ENCODE measurements at regions of chr1 and their contacts with region 1.

Region 1: DNA sequence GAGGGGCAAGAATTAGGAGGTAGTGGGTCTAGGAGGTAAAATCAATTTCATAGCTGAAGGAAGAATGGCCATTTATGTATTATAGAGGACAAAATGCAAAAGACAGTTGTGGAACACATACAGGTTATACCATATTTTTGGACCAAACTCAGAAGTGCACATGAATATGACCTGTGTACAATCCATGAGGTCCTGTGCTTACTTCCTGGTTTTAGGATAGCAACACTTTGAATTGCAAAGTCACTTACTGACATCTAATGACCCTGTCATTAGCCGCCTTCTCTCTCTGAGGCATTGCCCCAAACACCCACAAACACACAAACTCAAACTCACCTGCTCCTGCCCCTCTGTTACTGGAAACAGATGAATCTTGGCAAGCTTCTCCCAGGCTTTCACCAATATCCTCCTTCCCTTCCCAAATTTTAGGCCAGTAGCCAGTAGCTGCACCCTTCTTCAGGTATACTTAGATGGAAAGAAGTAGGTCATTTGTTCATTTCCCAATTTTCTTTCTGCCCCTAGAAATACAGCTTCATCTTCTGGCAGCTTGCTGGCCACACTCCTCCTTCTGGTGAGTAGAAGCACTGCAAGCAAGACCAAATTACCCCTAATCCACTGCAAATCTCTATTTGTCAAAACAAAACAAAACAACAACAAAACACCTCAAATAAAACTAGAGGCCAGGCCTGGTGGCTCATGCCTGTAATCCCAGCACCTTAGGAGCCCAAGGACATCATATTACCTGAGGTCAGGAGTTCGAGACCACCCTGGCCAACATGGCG is 13.7 kb upstream of the RPL5 start:
- DNase-seq: peak; percentile 32
- H3K4me3 ChIP-seq: no peak overlapping the region
- H3K27ac ChIP-seq: no peak overlapping the region
- H3K4me1 ChIP-seq: no peaks in the 10 kb centered on the region
- H3K27me3 ChIP-seq: no peaks in the 10 kb centered on the region
- CTCF ChIP-seq: peak; percentile 64 to 66
- POLR2A ChIP-seq: no peak

Region 2: GRCh38 chr1:92484472-92485380 is 333.4 kb before region 1 on chr1:
- CTCF ChIA-PET with region 1: interaction called, 4 read pairs
- POLR2A ChIA-PET with region 1: no interaction called
- dilution Hi-C with region 1: no loop called
- intact Hi-C with region 1: loop called (anchors 5 kb)
- DNase-seq: peak; percentile 23
- H3K4me3 ChIP-seq: peak overlapping the region in 1 of 3 experiments; percentile 26
- H3K27ac ChIP-seq: no peak overlapping the region
- H3K4me1 ChIP-seq: peaks cover 55% of the 10 kb centered on the region
- H3K27me3 ChIP-seq: peaks cover 66 to 94% of the 10 kb centered on the region in 2 experiments
- CTCF ChIP-seq: no peak
- POLR2A ChIP-seq: no peak

Region 3: GRCh38 chr1:92705446-92705845 is 112.7 kb before region 1 on chr1:
- CTCF ChIA-PET with region 1: interaction called, 10 read pairs
- POLR2A ChIA-PET with region 1: no interaction called
- dilution Hi-C with region 1: no loop called
- intact Hi-C with region 1: no loop called
- DNase-seq: peak; percentile 84
- H3K4me3 ChIP-seq: peak overlapping the region in 1 of 3 experiments; percentile 45
- H3K27ac ChIP-seq: peak overlapping the region; percentile 41
- H3K4me1 ChIP-seq: peaks cover 18% of the 10 kb centered on the region
- H3K27me3 ChIP-seq: no peaks in the 10 kb centered on the region
- CTCF ChIP-seq: no peak
- POLR2A ChIP-seq: no peak

Region 4: GRCh38 chr1:92749024-92749634 is 69.0 kb before region 1 on chr1:
- CTCF ChIA-PET with region 1: interaction called, 151 read pairs
- POLR2A ChIA-PET with region 1: no interaction called
- dilution Hi-C with region 1: no loop called
- intact Hi-C with region 1: loop called (anchors 1 kb)
- DNase-seq: peak; percentile 42
- H3K4me3 ChIP-seq: no peak overlapping the region
- H3K27ac ChIP-seq: no peak overlapping the region
- H3K4me1 ChIP-seq: peaks cover 13% of the 10 kb centered on the region
- H3K27me3 ChIP-seq: no peaks in the 10 kb centered on the region
- CTCF ChIP-seq: peak; percentile 61 to 64
- POLR2A ChIP-seq: no peak

Region 5: DNA sequence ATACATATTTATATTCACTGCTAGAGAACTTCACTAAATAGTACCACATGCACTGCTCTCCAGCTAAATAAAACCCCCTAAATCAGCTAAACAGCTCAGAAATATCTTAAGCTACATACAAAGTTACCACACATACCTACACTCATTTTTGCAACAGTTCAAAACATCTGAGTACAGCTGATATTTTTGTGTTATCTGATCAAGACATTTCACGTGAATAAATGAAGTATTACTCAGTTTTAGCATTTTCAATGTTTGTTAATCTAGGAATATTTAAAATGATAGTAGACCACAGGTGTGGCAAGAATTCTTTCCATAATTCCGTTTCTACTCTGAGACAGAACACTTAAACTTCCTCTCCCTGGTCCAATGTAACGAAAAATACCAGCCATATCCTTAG is 54.1 kb before region 1 on chr1:
- CTCF ChIA-PET with region 1: interaction called, 13 read pairs
- POLR2A ChIA-PET with region 1: no interaction called
- dilution Hi-C with region 1: no loop called
- intact Hi-C with region 1: no loop called
- DNase-seq: no peak
- H3K4me3 ChIP-seq: no peak overlapping the region
- H3K27ac ChIP-seq: no peak overlapping the region
- H3K4me1 ChIP-seq: no peaks in the 10 kb centered on the region
- H3K27me3 ChIP-seq: no peaks in the 10 kb centered on the region
- CTCF ChIP-seq: no peak
- POLR2A ChIP-seq: no peak

Region 6: DNA sequence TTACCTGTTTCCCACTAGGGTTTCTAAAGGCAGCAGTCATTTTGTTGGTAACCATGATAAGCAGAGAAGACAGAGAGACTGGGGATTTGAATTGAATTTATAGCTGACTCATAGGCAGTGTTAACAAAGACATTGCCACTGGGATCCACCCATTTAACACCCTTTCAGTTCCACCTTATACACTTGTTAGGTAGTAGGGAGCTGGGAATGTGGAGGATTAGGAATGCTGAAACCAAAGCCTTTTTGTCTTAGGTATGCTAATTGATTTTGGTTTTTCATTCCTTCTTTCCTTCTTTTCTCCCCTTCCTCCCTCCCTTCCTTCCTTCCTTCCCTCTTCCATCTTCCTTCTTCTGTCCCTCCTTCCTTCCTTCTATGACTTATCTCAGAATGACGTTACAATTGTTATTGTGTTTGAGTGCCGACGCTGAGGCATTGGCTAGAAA is 25.8 kb before region 1 on chr1:
- CTCF ChIA-PET with region 1: interaction called, 43 read pairs
- POLR2A ChIA-PET with region 1: interaction called, 4 read pairs
- dilution Hi-C with region 1: no loop called
- intact Hi-C with region 1: no loop called
- DNase-seq: peak; percentile 75
- H3K4me3 ChIP-seq: peak overlapping the region in 1 of 3 experiments; percentile 19
- H3K27ac ChIP-seq: peak overlapping the region; percentile 42
- H3K4me1 ChIP-seq: peaks cover 14% of the 10 kb centered on the region
- H3K27me3 ChIP-seq: no peaks in the 10 kb centered on the region
- CTCF ChIP-seq: no peak
- POLR2A ChIP-seq: no peak

Region 7: GRCh38 chr1:92831762-92832536 is 13.8 kb after region 1 on chr1 and contains the start of gene RPL5:
- CTCF ChIA-PET with region 1: interaction called, 33 read pairs
- POLR2A ChIA-PET with region 1: no interaction called
- dilution Hi-C with region 1: no loop called
- intact Hi-C with region 1: no loop called
- DNase-seq: peak; percentile 99
- H3K4me3 ChIP-seq: peak within 1 kb of the TSS; percentile 85 to 97 (median 85)
- H3K27ac ChIP-seq: peak within 1 kb of the TSS; percentile 73
- H3K4me1 ChIP-seq: peaks cover 26% of the 10 kb centered on the region
- H3K27me3 ChIP-seq: no peaks in the 10 kb centered on the region
- CTCF ChIP-seq: peak; percentile 97 to 98
- POLR2A ChIP-seq: peak; percentile 99
- total RNA-seq, gene RPL5: 1,109 and 1,117 TPM in 2 replicates

Measured in endothelial cell of umbilical vein (primary cell).